Activated CD4-positive, alpha-beta T cell treated with anti-CD3 and anti-CD28 coated beads for 36 hours (primary cell): ENCODE measurements at regions of chr2 and their contacts with region 1.

Region 1: DNA sequence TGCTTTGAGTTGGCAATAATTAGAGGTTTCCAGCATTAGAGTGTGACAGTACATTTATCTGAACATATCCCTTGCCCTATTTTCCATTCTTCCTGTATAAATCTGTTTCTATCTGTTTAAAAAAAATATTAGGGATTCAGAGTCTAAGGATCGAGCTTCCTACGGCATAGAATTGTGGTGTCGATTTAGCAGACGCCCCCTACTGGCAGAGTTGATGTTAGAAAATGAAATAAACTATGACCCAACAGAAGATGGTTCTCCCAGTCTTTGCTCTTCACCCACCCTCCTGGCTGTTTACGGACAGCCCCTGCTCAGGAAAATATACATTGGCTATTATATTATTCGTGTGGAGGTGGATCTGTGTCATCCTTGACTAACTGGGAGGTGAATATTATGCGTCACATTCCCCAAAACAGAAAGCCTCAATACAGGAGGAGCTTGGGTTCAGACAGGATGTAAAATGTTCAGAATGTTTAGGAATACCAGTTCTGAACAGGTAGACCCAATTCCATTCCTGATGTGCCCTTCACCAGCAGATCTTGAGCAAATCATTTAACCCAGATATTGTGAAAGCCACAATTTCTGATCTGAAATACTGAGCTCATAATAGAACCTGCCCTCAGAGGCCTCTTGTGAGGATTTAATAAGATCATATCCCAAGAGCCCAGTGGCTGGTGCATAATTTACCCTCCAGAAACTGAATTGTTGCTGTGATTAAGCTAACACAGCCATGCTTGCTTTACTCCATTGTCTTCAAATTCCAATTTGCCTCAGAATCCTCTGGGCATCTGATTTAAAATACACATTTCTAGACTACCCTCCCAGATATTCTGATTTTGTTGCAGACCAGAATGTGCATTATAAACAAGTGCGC is 10.8 kb upstream of the ERMN start:
- DNase-seq: peak; percentile 60
- ATAC-seq: no peak
- H3K4me3 Mint-ChIP-seq: peak overlapping the region; percentile 37
- H3K27ac Mint-ChIP-seq: no peak overlapping the region
- H3K4me1 Mint-ChIP-seq: peaks cover 70% of the 10 kb centered on the region
- H3K27me3 Mint-ChIP-seq: no peaks in the 10 kb centered on the region

Region 2: DNA sequence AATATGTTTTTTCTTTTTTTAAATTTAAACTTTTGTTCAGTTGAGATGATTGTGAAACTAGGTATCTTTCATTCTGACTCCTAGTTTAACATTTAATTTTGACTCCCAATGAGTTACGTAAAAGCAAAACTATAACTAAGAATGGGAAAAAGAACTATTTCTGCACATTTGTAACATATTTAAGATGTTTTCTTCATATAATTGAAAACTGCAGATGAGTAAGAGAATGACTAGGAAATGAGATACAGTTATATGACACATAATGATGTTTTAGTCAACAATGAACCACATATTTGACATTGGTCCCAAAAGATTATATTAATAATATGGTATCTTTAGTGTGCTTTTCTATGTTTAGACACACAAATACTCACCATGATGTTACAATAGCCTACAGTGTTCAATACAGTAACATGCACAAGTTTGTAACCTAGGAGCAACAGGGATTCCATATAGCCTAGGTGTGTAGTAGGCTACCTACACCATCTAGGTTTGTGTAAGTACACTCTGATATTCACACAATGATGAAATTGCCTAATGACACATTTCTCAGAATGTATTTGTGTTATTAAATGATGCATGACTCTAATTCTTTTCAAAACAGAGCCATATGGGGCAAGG is 23.4 kb before region 1 on chr2:
- CTCF ChIA-PET with region 1: interaction called, 189 read pairs
- POLR2A ChIA-PET with region 1: no interaction called
- intact Hi-C with region 1: no loop called
- DNase-seq: no peak
- ATAC-seq: peak; percentile 84
- H3K4me3 Mint-ChIP-seq: no peak overlapping the region
- H3K27ac Mint-ChIP-seq: no peak overlapping the region
- H3K4me1 Mint-ChIP-seq: peaks cover 49% of the 10 kb centered on the region
- H3K27me3 Mint-ChIP-seq: no peaks in the 10 kb centered on the region

Region 3: DNA sequence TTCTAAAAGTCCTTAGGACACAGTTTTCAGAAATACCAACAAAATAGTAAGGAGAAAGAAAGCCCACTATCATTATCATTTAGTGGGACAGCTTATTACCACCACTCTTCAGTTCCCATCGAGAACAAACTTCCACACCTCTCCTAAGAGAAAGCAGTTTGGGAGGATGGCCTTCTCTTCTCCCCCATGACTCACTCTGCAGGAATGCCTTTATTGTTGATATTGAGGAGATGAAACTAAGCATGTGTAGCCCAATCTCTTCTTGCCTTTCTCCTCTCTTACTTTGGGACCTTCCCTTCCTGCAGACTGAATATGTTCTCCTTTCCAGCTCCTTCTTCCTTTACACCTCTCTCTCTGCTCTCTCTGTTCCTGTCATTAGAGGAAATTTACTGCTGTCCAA is 19.2 kb after region 1 on chr2:
- CTCF ChIA-PET with region 1: interaction called, 30 read pairs
- POLR2A ChIA-PET with region 1: no interaction called
- intact Hi-C with region 1: no loop called
- DNase-seq: no peak
- ATAC-seq: no peak
- H3K4me3 Mint-ChIP-seq: no peak overlapping the region
- H3K27ac Mint-ChIP-seq: no peak overlapping the region
- H3K4me1 Mint-ChIP-seq: peaks cover 40% of the 10 kb centered on the region
- H3K27me3 Mint-ChIP-seq: no peaks in the 10 kb centered on the region

Region 4: GRCh38 chr2:157404363-157404762 is 68.0 kb after region 1 on chr2:
- CTCF ChIA-PET with region 1: interaction called, 20 read pairs
- POLR2A ChIA-PET with region 1: no interaction called
- intact Hi-C with region 1: no loop called
- DNase-seq: peak; percentile 72
- ATAC-seq: peak; percentile 95
- H3K4me3 Mint-ChIP-seq: peak overlapping the region; percentile 0
- H3K27ac Mint-ChIP-seq: peak overlapping the region; percentile 80
- H3K4me1 Mint-ChIP-seq: peaks cover 75% of the 10 kb centered on the region
- H3K27me3 Mint-ChIP-seq: no peaks in the 10 kb centered on the region

Region 5: GRCh38 chr2:157443795-157444640 is 107.6 kb after region 1 on chr2 and contains the start of gene CYTIP:
- CTCF ChIA-PET with region 1: interaction called, 6 read pairs
- POLR2A ChIA-PET with region 1: interaction called, 18 read pairs
- intact Hi-C with region 1: no loop called
- DNase-seq: peak; percentile 82
- ATAC-seq: peak; percentile 44
- H3K4me3 Mint-ChIP-seq: peak within 1 kb of the TSS; percentile 93
- H3K27ac Mint-ChIP-seq: peak within 1 kb of the TSS; percentile 95
- H3K4me1 Mint-ChIP-seq: peaks cover 40% of the 10 kb centered on the region
- H3K27me3 Mint-ChIP-seq: no peaks in the 10 kb centered on the region
- total RNA-seq, gene CYTIP: 470 to 536 TPM

Region 6: DNA sequence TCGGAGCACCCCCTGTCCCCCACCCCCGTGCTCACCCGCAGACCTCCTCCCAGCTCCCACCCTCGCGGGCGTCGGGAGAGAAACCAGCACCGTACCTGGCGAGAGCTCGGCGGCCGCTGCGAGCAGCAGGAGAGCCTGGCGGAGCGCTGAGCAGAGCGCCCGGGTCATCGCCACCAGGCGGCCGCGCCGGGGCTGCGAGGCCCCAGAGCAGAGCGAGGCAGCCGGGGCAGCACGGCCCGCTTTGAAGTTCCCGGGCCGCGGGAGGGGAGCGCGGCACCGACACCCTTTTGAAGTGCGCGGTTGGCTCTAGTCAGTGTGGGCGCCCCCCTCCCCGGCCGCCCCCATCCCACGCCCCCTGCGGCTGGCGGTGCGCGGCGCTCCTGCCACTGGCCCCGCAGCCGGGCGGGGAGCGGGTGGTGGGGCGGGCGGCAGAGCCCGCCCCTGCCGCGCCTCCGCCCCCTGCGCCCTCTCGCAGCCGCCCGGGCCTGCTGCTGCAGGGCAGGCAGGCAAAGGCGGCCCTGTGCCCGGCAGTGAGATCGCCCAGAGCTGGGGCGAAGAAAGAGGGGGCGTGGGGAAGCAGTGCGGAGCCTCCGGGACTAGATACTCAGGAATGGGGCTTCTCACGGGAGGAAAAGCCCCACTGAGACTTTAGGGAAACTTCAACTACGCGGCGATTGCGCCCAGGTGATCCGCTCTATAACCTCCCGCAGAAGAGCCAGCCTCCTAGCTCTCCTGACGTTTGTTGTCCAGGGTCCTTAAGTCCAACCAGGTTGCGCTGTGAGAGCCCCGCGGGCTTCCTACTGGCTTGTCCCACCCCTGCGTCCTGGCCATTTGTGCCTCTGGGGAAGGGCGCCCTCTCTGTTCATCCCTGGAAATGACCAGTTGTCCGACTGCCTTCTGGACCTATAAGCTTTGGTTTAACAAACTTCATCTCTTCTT is 292.4 kb after region 1 on chr2 and contains the start of gene ACVR1C:
- CTCF ChIA-PET with region 1: interaction called, 3 read pairs
- POLR2A ChIA-PET with region 1: no interaction called
- intact Hi-C with region 1: loop called in 1 of 2 experiments (anchors 5 kb)
- DNase-seq: peak; percentile 80
- ATAC-seq: peak; percentile 82
- H3K4me3 Mint-ChIP-seq: peak within 1 kb of the TSS; percentile 76
- H3K27ac Mint-ChIP-seq: peak within 1 kb of the TSS; percentile 23
- H3K4me1 Mint-ChIP-seq: peaks cover 34% of the 10 kb centered on the region
- H3K27me3 Mint-ChIP-seq: peaks cover 5% of the 10 kb centered on the region
- total RNA-seq, gene ACVR1C: 1.6 to 1.7 TPM